ENCODE measurements at regions of chr2 and their contacts with region 1.

Region 1: GRCh38 chr2:45935791-45936622 is 284.5 kb downstream of the PRKCE start:
- DNase-seq: peak; percentile 2 to 76 (median 22)
- ATAC-seq: peak; percentile 46
- H3K4me3 ChIP-seq: no peak overlapping the region
- H3K4me3 Mint-ChIP-seq: no peak overlapping the region
- H3K27ac ChIP-seq: no peak overlapping the region
- H3K27ac Mint-ChIP-seq: no peak overlapping the region
- H3K4me1 ChIP-seq: peaks cover 4% of the 10 kb centered on the region
- H3K4me1 Mint-ChIP-seq: no peaks in the 10 kb centered on the region
- H3K27me3 ChIP-seq: no peaks in the 10 kb centered on the region
- H3K27me3 Mint-ChIP-seq: no peaks in the 10 kb centered on the region
- CTCF ChIP-seq: peak; percentile 38

Region 2: DNA sequence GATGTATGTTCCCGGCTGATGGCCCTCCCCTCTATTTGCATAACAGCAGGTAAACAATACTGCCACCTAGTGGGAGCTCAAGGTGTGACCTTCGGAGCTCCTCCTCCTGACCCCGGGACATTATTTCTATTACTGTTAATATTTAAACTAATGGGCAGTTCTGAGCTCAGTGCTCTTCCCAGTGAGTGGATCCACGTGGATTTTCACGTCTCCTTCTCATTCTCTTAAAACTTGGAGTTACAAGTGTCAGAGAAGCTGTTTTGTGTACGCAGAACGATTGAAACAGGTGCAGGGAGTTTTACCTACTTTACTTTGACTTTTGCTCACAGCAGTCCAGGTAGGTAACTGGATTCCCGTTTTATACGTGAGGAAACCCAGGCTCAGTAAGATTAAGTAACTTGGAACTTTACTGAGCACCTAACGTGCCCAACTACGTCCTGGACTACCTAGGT is 157.3 kb before region 1 on chr2:
- CTCF ChIA-PET with region 1: no interaction called
- POLR2A ChIA-PET with region 1: no interaction called
- intact Hi-C with region 1: loop called (anchors 2 to 5 kb)
- DNase-seq: peak; percentile 43 to 87 (median 64)
- ATAC-seq: peak; percentile 90
- H3K4me3 ChIP-seq: no peak overlapping the region
- H3K4me3 Mint-ChIP-seq: peak overlapping the region; percentile 27
- H3K27ac ChIP-seq: no peak overlapping the region
- H3K27ac Mint-ChIP-seq: no peak overlapping the region
- H3K4me1 ChIP-seq: peaks cover 5% of the 10 kb centered on the region
- H3K4me1 Mint-ChIP-seq: peaks cover 6% of the 10 kb centered on the region
- H3K27me3 ChIP-seq: no peaks in the 10 kb centered on the region
- H3K27me3 Mint-ChIP-seq: no peaks in the 10 kb centered on the region
- CTCF ChIP-seq: peak; percentile 89

Measured in CD4-positive, alpha-beta T cell (primary cell).